Activated T-helper 1 cell treated with anti-CD3 and anti-CD28 coated beads, Interleukin-12 subunit alpha, Interleukin-12 subunit beta, Interleukin-2, Interleukin-4 antibody, amounts not matched to agents 30 ng/mL and 10 ng/mL and 1 ng/mL, durations not matched to agents 14 hours and 24 hours and 36 hours (primary cell): ENCODE measurements at regions of chr3 and their contacts with region 1.

Region 1: DNA sequence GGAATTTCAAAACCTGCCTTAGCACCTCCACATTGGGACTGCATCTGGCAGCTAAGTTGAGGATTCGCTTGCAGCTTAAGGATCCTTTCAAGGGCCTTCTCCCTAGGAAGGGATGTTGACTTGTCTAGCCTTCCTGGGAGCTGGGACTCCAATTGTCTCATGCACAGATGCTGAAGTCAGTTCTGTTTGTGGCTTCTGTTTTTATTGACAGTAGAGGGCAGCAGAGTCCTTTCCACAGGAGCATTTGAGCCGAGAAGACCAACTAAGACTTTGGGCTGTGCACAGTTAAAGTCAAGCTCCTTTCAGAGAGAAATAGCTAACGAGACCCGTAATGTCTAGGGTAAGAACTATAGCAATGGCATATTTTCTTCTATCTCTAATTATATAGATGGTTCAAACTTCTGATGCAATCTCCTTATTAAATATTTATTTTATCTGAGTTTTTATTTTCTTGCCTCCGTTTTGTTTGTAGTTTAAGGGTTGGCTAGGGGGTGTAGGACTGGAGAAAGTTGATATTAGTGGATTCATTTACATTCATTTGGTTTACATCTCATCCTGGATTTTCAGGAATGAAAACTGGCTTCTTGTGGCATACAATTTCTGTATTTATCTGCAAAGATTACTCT is 59.7 kb upstream of the KBTBD8 start:
- DNase-seq: no peak
- H3K4me3 Mint-ChIP-seq: no peak overlapping the region
- H3K27ac Mint-ChIP-seq: no peak overlapping the region
- H3K4me1 Mint-ChIP-seq: no peaks in the 10 kb centered on the region
- H3K27me3 Mint-ChIP-seq: peaks cover 4% of the 10 kb centered on the region

Region 2: GRCh38 chr3:66797889-66798560 is 140.4 kb before region 1 on chr3:
- intact Hi-C with region 1: no loop called
- DNase-seq: no peak
- H3K4me3 Mint-ChIP-seq: no peak overlapping the region
- H3K27ac Mint-ChIP-seq: no peak overlapping the region
- H3K4me1 Mint-ChIP-seq: no peaks in the 10 kb centered on the region
- H3K27me3 Mint-ChIP-seq: peaks cover 7% of the 10 kb centered on the region

Region 3: GRCh38 chr3:67037615-67038014 is 99.2 kb after region 1 on chr3:
- intact Hi-C with region 1: loop called (anchors 1 kb)
- DNase-seq: no peak
- H3K4me3 Mint-ChIP-seq: no peak overlapping the region
- H3K27ac Mint-ChIP-seq: no peak overlapping the region
- H3K4me1 Mint-ChIP-seq: no peaks in the 10 kb centered on the region
- H3K27me3 Mint-ChIP-seq: peaks cover 5% of the 10 kb centered on the region

Region 4: DNA sequence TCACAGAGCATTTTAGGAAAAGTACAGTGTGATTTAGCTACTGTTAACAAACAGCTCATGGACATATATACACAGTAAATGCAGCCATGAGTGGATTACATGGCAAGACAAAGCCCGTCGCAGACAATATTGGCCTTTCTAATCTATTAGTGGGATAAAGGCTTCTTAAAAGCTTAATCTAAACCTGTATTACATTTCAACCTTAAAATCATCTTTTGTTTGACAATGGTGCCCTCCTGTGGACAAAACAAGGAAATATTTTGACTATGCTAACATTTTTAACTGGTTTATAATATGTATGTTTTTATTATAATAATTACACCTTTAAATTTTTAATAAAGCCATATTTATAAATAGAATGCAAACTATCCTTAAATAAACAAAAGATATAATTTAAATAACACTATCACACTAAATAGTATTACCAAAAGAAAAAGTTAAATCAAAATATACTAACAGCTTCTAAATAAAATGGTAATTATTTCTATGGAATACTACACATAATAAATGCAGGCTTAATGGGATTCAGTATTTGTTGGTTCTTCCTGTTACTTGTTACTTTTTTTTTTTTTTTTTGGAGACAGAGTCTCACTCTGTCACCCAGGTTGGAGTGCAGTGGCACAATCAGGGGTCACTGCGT is 1955.3 kb after region 1 on chr3:
- intact Hi-C with region 1: loop called (anchors 2 kb)
- DNase-seq: no peak
- H3K4me3 Mint-ChIP-seq: no peak overlapping the region
- H3K27ac Mint-ChIP-seq: no peak overlapping the region
- H3K4me1 Mint-ChIP-seq: no peaks in the 10 kb centered on the region
- H3K27me3 Mint-ChIP-seq: peaks cover 19% of the 10 kb centered on the region